ENCODE measurements at regions of chr19 and their contacts with region 1.

Region 1: DNA sequence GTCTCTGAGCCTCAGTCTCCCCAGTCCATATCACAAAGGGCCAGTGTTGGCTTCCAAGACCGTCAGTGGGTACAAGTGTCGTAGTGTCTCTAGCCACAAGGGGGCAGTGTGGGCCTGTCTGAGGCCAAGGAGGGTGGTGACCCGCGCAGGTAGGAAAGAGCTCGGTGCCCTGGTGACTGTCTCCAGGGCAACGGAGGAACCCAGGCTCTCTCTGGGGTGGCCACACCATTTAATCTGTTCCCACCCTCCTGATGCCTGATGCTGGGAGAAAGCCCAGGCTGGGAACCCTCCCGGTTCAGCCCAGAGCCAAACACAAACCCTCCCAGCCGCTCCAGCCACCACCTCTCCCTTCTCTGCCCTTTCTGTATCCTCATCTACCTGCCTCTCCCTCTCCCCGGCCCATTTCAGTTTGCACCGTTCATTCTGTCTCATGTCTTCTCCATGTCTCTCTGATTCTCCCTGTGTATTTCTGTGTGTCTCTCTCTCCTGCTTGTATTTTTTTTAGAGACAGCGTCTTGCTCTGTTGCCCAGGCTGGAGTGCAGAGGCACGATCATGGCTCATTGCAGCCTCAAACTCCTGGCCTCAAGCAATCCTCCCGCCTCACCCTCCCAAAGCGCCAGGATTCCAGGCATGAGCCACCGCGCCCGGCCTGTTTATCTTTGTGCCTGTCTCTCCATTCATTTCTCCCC is 17.5 kb upstream of the MEIS3 start:
- DNase-seq: peak; percentile 80
- H3K4me3 ChIP-seq: no peak overlapping the region
- H3K27ac ChIP-seq: no peak overlapping the region
- H3K4me1 ChIP-seq: peaks cover 14% of the 10 kb centered on the region
- CTCF ChIP-seq: peak; percentile 94

Region 2: DNA sequence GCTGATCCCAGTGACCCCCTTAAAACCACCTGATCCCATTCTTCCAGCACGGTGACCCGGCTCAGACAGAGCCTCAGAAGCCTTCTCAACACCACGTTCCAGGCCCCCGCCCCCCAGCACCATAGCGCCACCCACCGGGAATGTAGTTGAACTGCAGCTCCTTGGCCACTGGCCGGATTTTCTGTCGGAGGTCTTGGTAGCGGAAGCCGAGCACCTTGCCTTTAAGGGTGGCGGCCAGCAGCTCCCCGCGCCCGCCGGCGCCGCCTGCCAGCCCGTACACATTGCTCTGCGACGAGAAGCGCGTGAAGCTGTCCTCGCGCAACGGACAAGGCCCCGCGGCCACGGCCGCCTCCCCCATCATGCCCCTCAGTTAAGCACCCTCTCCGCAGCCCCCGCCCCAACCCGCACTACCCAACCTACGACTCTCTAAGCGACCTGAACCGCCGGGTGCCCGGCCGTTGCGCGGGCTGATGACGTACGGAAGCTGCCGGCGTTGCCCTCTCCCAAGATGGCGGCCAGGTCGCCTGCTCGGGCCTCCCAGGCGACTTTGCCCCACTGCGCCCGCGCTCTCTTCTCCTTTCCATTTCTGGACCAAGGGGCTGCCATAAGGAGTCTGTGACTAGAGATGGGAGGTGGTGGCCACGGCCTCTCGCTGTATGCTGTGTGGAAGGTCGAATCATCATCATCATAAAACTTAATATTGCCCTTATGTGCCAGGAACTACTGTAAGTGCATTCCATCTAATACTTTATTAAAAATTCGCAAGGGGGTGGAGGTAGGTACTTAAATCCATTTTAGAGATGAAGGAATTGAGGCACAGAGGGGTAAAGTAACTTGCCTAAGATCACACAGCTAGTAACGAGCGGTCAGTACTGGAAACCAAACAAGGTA is 47.2 kb after region 1 on chr19 and contains the start of gene KPTN:
- CTCF ChIA-PET with region 1: no interaction called
- POLR2A ChIA-PET with region 1: no interaction called
- intact Hi-C with region 1: loop called (anchors 2 kb)
- DNase-seq: peak; percentile 94
- H3K4me3 ChIP-seq: peak within 1 kb of the TSS; percentile 77
- H3K27ac ChIP-seq: peak within 1 kb of the TSS; percentile 91
- H3K4me1 ChIP-seq: peaks cover 40% of the 10 kb centered on the region
- CTCF ChIP-seq: peak; percentile 97
- total RNA-seq, gene KPTN: 13.8 and 14.0 TPM in 2 replicates

Region 3: DNA sequence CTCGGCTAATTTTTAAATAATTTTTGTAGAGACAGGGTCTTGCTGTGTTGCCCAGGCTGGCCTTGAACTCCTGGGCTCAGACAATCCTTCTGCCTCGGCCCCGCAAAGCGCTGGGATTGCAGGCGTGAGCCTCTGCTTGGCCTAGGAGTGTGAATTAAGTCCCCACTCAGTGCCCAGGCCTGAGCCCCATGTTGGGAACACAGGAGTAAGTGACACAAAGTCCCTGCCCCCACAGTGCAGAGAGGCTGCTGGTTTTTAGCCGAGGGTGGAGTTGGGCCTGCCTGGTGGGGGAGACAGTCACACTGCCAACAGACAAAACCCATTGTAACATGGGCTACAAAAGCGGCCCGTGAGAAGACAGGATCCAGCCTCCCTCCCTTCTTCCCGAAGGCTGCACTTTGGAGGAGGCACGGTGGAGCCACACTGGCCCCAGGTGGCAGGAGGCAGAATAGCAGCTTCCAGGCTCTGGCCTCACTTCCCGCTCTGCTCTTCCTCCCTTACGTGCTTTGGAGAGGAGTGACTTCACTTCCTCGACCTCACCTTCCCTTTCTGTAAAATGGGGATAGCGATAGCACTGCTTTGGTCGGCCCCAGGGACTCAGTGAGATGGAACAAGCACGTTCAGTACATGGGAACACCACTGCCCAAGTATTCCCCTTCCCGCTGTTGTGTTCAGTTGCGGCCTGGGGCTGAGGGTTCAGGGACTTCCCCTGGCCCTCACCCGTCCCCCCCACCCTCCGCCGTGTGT is 261.2 kb after region 1 on chr19:
- CTCF ChIA-PET with region 1: no interaction called
- POLR2A ChIA-PET with region 1: no interaction called
- intact Hi-C with region 1: loop called (anchors 1 kb)
- DNase-seq: peak; percentile 76
- H3K4me3 ChIP-seq: no peak overlapping the region
- H3K27ac ChIP-seq: peak overlapping the region; percentile 16
- H3K4me1 ChIP-seq: peaks cover 5% of the 10 kb centered on the region
- CTCF ChIP-seq: peak; percentile 94

Region 4: GRCh38 chr19:47707135-47707925 is 270.5 kb after region 1 on chr19:
- CTCF ChIA-PET with region 1: interaction called, 7 read pairs
- POLR2A ChIA-PET with region 1: no interaction called
- intact Hi-C with region 1: loop called (anchors 1 kb)
- DNase-seq: peak; percentile 79
- H3K4me3 ChIP-seq: no peak overlapping the region
- H3K27ac ChIP-seq: no peak overlapping the region
- H3K4me1 ChIP-seq: no peaks in the 10 kb centered on the region
- CTCF ChIP-seq: peak; percentile 86

Region 5: GRCh38 chr19:47742634-47743033 is 305.8 kb after region 1 on chr19:
- CTCF ChIA-PET with region 1: no interaction called
- POLR2A ChIA-PET with region 1: no interaction called
- intact Hi-C with region 1: loop called (anchors 1 kb)
- DNase-seq: no peak
- H3K4me3 ChIP-seq: no peak overlapping the region
- H3K27ac ChIP-seq: no peak overlapping the region
- H3K4me1 ChIP-seq: peaks cover 31% of the 10 kb centered on the region
- CTCF ChIP-seq: no peak

Measured in OCI-LY7 (cell line).